ENCODE measurements at regions of chr6 and their contacts with region 1.

Region 1: DNA sequence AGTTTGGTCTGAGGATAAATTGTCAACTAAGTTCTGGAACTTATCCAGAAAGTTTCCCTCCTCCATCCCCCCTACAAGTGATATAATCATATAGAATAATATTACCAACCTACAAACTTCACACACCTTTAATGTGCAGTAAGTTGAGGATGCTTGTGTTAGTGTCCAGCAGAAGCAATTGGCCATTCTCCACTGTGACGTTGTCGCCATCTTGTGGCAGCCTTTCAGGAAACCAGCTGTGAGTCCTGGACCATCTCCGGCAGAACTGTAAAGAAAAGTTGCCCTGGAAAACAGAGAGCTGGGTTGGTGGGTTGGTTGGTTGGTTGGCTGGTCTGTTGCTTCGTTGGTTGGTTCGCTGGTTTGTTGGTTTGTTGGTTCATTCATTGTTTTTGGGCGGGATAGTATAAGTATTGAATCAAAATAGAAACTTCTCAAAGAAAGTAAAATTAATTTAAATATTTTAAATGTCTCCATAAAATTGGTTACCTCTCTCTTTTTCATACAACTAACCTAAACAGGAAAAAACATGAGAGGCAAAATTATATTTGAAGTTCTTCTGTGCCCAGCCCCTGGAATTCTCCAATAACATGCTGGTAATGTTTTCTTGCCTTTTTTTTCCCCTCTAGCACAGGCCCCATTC is 127.5 kb downstream of the PKHD1 start:
- DNase-seq: peak in 1 of 2 experiments; percentile 47
- H3K4me3 ChIP-seq: no peak overlapping the region
- H3K27ac ChIP-seq: no peak overlapping the region
- H3K4me1 ChIP-seq: no peaks in the 10 kb centered on the region
- H3K27me3 ChIP-seq: no peaks in the 10 kb centered on the region
- CTCF ChIP-seq: peak; percentile 80

Region 2: GRCh38 chr6:51855310-51856082 is 104.4 kb before region 1 on chr6:
- CTCF ChIA-PET with region 1: no interaction called
- POLR2A ChIA-PET with region 1: no interaction called
- intact Hi-C with region 1: loop called (anchors 1 kb)
- DNase-seq: peak in 1 of 2 experiments; percentile 54
- H3K4me3 ChIP-seq: no peak overlapping the region
- H3K27ac ChIP-seq: no peak overlapping the region
- H3K4me1 ChIP-seq: no peaks in the 10 kb centered on the region
- H3K27me3 ChIP-seq: no peaks in the 10 kb centered on the region
- CTCF ChIP-seq: peak; percentile 78

Measured in PC-9 (cell line).